ENCODE measurements at regions of chr2 and their contacts with region 1.

Region 1: DNA sequence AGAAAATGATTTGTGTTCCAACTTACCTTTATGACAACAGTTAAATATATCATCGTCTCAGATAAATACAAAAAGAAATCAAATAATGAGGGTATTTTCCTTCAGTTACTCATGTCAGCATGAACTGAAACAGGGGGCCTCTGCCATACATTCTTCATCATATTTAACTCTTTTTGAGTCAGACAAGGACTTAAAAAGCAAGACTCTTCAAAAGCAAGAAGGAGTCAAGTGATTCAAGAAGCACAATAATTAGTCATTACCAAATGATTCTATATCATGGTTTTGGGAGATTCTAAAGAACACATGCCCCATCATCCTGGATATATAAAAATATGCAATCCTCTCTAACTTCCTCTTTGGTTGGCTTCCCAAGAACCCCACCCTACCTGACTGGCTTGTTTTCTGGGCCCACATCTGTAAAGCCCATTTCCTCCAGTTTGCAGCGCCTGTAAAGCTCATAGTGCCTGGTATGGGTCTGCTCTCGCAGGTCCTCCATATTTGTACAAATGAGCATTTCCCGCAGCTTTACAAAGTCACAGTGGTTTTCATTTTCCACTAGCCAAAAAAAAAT is 49.7 kb downstream of the SEPTIN10 start:
- DNase-seq: no peak
- H3K4me3 ChIP-seq: no peak overlapping the region
- H3K27ac ChIP-seq: peak overlapping the region; percentile 8; the same call in 1 of the 2 replicates
- H3K4me1 ChIP-seq: peaks cover 25% of the 10 kb centered on the region
- H3K27me3 ChIP-seq: no peaks in the 10 kb centered on the region
- CTCF ChIP-seq: no peak

Region 2: GRCh38 chr2:109582928-109583895 is 19.1 kb after region 1 on chr2:
- CTCF ChIA-PET with region 1: no interaction called
- POLR2A ChIA-PET with region 1: interaction called, 24 read pairs
- intact Hi-C with region 1: no loop called
- DNase-seq: no peak
- H3K4me3 ChIP-seq: no peak overlapping the region
- H3K27ac ChIP-seq: no peak overlapping the region
- H3K4me1 ChIP-seq: no peaks in the 10 kb centered on the region
- H3K27me3 ChIP-seq: no peaks in the 10 kb centered on the region
- CTCF ChIP-seq: no peak

Region 3: DNA sequence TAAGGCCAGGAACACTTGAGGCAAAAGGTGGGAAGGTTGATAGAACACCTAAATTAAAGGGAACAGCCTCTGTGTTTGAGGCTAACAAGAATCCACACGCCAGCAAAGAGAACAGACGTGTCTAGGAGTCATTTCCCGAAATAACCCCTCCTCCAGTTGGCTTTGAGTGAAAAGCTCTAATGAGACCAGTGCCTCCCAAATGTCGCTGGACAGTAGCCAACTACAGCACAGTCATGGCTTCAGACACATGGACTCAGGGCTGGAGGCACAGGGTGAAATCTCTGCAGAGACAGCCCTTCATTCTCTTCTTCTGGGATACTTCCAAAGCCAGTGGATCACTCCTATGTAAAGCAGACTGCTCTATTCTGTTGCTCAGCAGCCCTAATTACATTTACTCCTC is 99.7 kb after region 1 on chr2:
- CTCF ChIA-PET with region 1: interaction called, 13 read pairs
- POLR2A ChIA-PET with region 1: no interaction called
- intact Hi-C with region 1: no loop called
- DNase-seq: no peak
- H3K4me3 ChIP-seq: no peak overlapping the region
- H3K27ac ChIP-seq: no peak overlapping the region
- H3K4me1 ChIP-seq: no peaks in the 10 kb centered on the region
- H3K27me3 ChIP-seq: no peaks in the 10 kb centered on the region
- CTCF ChIP-seq: no peak